Activated naive CD4-positive, alpha-beta T cell treated with anti-CD3 and anti-CD28 coated beads for 36 hours (primary cell): ENCODE measurements at regions of chr3 and their contacts with region 1.

Region 1: GRCh38 chr3:60064210-60065178 is 1014.7 kb upstream of the CFAP20DC start:
- DNase-seq: peak; percentile 70
- H3K4me3 Mint-ChIP-seq: peak overlapping the region; percentile 11
- H3K27ac Mint-ChIP-seq: peak overlapping the region; percentile 88
- H3K4me1 Mint-ChIP-seq: peaks cover 89% of the 10 kb centered on the region
- H3K27me3 Mint-ChIP-seq: no peaks in the 10 kb centered on the region

Region 2: DNA sequence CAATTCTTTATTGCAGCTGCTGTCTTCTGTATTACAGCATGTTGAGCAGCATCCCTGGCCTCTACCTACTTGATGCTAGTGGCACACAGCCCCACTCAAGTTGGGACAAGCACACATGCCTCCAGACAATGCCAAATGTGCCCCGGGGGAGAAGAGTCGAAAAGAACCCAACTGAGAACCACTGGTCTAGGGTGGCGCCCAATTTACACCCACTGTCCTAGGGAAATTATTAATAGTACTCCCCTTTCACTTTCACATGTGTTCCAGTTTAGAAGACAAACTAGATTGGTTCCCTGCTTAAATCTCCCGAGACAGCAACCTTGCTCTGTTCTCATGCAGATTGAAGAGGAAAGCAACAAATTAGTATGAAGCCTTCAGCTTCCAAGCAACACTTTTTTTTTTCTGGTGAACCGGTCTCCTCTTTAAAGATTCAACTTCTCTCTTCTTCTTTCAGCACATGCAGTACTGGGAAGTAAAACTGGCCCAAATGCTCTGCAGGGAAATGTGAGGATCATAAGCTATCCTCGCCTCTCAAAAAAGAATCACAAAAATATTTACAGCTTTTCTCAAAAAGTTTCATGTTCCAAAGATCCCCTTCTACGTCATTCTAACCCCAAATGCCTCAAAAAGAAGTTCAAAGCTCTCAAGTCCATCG is 190.8 kb before region 1 on chr3:
- CTCF ChIA-PET with region 1: no interaction called
- intact Hi-C with region 1: loop called (anchors 5 kb)
- DNase-seq: no peak
- H3K4me3 Mint-ChIP-seq: no peak overlapping the region
- H3K27ac Mint-ChIP-seq: peak overlapping the region; percentile 6
- H3K4me1 Mint-ChIP-seq: peaks cover 80% of the 10 kb centered on the region
- H3K27me3 Mint-ChIP-seq: no peaks in the 10 kb centered on the region

Region 3: DNA sequence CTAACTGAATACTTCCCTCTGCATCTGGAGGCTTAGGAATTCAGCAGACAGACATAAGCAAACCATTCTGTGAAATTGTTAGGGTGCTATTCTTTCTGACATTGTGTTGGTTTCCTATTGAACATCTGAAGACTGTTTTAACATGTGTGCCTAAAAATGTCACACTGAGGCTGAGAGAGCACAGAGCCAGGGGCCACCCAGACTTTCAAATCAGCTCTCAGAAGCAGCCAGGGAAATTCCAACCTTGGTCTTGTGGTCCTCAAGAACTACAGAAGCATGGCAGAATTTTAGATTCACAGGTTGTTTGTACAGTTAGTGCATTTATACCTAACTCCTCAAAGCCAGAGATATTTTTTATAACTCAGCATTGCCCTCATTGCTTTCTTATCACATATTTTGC is 85.5 kb before region 1 on chr3:
- CTCF ChIA-PET with region 1: no interaction called
- intact Hi-C with region 1: no loop called
- DNase-seq: peak; percentile 75
- H3K4me3 Mint-ChIP-seq: peak overlapping the region; percentile 39
- H3K27ac Mint-ChIP-seq: peak overlapping the region; percentile 94
- H3K4me1 Mint-ChIP-seq: peaks cover 83% of the 10 kb centered on the region
- H3K27me3 Mint-ChIP-seq: no peaks in the 10 kb centered on the region

Region 4: GRCh38 chr3:59998058-59998457 is 66.4 kb before region 1 on chr3:
- CTCF ChIA-PET with region 1: no interaction called
- intact Hi-C with region 1: no loop called
- DNase-seq: no peak
- H3K4me3 Mint-ChIP-seq: no peak overlapping the region
- H3K27ac Mint-ChIP-seq: peak overlapping the region; percentile 8
- H3K4me1 Mint-ChIP-seq: peaks cover 90% of the 10 kb centered on the region
- H3K27me3 Mint-ChIP-seq: no peaks in the 10 kb centered on the region

Region 5: GRCh38 chr3:60010781-60011180 is 53.7 kb before region 1 on chr3:
- CTCF ChIA-PET with region 1: no interaction called
- intact Hi-C with region 1: loop called (anchors 1 kb)
- DNase-seq: peak; percentile 80
- H3K4me3 Mint-ChIP-seq: peak overlapping the region; percentile 75
- H3K27ac Mint-ChIP-seq: peak overlapping the region; percentile 97
- H3K4me1 Mint-ChIP-seq: peaks cover 87% of the 10 kb centered on the region
- H3K27me3 Mint-ChIP-seq: no peaks in the 10 kb centered on the region

Region 6: GRCh38 chr3:60030982-60031381 is 33.5 kb before region 1 on chr3:
- CTCF ChIA-PET with region 1: interaction called, 3 read pairs
- intact Hi-C with region 1: loop called (anchors 1 kb)
- DNase-seq: no peak
- H3K4me3 Mint-ChIP-seq: peak overlapping the region; percentile 6
- H3K27ac Mint-ChIP-seq: peak overlapping the region; percentile 90
- H3K4me1 Mint-ChIP-seq: peaks cover 77% of the 10 kb centered on the region
- H3K27me3 Mint-ChIP-seq: no peaks in the 10 kb centered on the region

Region 7: DNA sequence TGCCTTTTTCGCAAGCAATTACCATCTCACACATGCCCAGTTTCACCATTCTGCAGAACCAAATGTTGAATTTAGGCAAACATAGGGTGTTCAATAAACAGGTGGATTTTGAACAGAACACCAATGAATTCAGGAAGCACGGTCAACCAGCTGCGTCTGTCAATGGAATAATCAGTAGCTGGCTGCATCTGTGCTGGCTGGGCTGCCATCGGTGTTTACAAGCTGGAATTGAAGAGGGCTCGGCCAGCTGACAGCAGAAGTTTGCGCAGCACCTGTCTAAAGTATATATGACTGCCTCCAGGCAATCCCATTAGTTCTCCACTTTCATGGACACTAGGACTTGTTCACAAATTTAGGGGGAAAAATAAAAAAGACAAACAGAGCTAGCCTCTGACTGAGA is 18.3 kb before region 1 on chr3:
- CTCF ChIA-PET with region 1: interaction called, 4 read pairs
- intact Hi-C with region 1: loop called (anchors 1 kb)
- DNase-seq: no peak
- H3K4me3 Mint-ChIP-seq: no peak overlapping the region
- H3K27ac Mint-ChIP-seq: peak overlapping the region; percentile 91
- H3K4me1 Mint-ChIP-seq: peaks cover 80% of the 10 kb centered on the region
- H3K27me3 Mint-ChIP-seq: no peaks in the 10 kb centered on the region

Region 8: DNA sequence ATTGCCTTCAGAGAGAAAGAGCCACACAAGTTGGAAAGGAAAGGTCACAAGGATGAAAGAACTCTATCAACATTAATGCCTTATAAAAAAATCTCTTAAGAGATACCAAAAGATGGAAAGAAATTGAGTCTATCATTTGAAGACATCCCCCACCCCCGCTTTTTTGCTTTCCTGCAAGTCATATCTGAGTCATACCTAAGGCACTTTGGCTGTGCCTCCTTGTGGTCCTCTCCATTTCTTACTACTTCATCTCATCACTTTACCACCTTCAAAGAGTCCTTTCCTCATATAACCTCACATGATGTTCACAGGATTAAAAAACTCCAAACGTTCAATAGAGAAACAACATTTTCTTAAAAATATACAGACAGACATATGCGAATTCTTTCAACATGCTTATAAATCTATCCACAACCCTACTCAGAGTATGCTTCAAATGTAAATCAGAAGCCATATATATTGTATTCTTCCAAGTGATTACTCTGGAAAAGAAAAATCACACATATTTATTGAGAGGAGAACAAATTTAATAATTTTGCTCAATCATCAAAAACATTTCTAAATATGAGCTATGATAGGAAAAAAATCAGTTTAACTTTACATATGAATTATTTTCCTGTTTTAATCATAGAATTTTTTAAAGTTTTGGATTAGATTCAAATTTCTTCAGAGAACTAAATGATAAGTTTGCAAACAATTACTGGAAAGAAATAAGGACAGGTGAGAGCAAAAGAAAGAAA is 10.8 kb before region 1 on chr3:
- CTCF ChIA-PET with region 1: interaction called, 3 read pairs
- intact Hi-C with region 1: loop called (anchors 1 kb)
- DNase-seq: peak; percentile 80
- H3K4me3 Mint-ChIP-seq: peak overlapping the region; percentile 32
- H3K27ac Mint-ChIP-seq: peak overlapping the region; percentile 92
- H3K4me1 Mint-ChIP-seq: peaks cover 86% of the 10 kb centered on the region
- H3K27me3 Mint-ChIP-seq: no peaks in the 10 kb centered on the region

Region 9: GRCh38 chr3:60160111-60160821 is 95.8 kb after region 1 on chr3:
- CTCF ChIA-PET with region 1: no interaction called
- intact Hi-C with region 1: no loop called
- DNase-seq: no peak
- H3K4me3 Mint-ChIP-seq: no peak overlapping the region
- H3K27ac Mint-ChIP-seq: no peak overlapping the region
- H3K4me1 Mint-ChIP-seq: peaks cover 7% of the 10 kb centered on the region
- H3K27me3 Mint-ChIP-seq: no peaks in the 10 kb centered on the region